HCT116 (cell line): ENCODE measurements at regions of chr20 and their contacts with region 1.

Region 1: DNA sequence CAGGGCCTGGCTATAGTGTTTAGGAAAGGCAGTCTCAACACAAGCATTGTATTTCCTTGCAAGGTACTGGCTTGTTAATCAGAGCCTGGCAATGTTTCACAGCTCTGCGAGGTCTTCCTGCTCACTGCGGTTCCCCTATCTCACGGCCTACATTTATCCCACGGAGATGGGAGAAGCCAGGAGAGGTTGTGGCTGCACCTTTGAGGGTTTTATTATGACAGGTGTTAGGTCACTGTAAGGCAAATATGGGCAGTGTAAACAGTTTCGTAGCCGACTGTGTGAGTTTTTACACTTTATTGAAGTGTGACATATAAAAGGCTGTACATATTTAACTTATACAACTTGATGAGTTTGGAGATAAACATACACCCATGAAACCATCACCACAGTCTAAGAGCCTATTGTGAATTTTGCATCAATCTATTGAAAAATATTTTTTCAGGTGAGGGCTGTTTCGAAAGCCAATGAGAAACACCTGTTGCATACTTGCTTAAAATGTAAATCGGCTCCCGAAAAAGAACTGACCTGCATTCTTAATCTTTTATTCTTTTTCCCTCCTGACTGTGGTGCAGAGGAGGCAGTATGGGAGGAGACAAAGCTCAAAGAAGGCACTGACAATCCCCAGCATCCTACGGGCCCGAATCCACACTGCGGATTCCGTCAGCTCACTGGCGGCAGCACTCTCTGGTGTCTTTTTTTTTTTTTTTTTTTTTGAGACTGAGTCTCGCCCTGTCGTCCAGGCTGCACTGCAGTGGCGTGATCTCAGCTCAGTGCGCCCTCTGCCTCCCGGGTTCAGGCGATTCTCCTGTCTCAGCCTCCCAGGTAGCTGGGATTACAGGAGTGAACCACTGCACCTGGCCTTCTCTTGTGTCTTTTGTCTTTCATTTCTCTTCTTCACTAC is 7.5 kb upstream of the RBM38 start:
- DNase-seq: no peak
- ATAC-seq: no peak
- H3K4me3 ChIP-seq: no peak overlapping the region
- H3K27ac ChIP-seq: no peak overlapping the region
- H3K4me1 ChIP-seq: peaks cover 2% of the 10 kb centered on the region in 2 experiments; a peak in 3 of 4 replicates
- H3K27me3 ChIP-seq: no peaks in the 10 kb centered on the region
- CTCF ChIP-seq: no peak
- POLR2A ChIP-seq: no peak
- RAD21 ChIP-seq: no peak

Region 2: GRCh38 chr20:57498425-57499400 is 115.0 kb after region 1 on chr20:
- CTCF ChIA-PET with region 1: interaction called, 5 read pairs
- POLR2A ChIA-PET with region 1: interaction called, 3 read pairs
- RAD21 ChIA-PET with region 1: no interaction called
- intact Hi-C with region 1: loop called (anchors 1 kb)
- DNase-seq: peak; percentile 19
- ATAC-seq: peak; percentile 88
- H3K4me3 ChIP-seq: no peak overlapping the region
- H3K27ac ChIP-seq: no peak overlapping the region
- H3K4me1 ChIP-seq: peaks cover 7 to 14% of the 10 kb centered on the region in 2 experiments; a peak in 3 of 4 replicates
- H3K27me3 ChIP-seq: no peaks in the 10 kb centered on the region
- CTCF ChIP-seq: peak; percentile 45 to 61 (median 51)
- POLR2A ChIP-seq: no peak
- RAD21 ChIP-seq: peak; percentile 55